ENCODE measurements at regions of chr6 and their contacts with region 1.

Region 1: DNA sequence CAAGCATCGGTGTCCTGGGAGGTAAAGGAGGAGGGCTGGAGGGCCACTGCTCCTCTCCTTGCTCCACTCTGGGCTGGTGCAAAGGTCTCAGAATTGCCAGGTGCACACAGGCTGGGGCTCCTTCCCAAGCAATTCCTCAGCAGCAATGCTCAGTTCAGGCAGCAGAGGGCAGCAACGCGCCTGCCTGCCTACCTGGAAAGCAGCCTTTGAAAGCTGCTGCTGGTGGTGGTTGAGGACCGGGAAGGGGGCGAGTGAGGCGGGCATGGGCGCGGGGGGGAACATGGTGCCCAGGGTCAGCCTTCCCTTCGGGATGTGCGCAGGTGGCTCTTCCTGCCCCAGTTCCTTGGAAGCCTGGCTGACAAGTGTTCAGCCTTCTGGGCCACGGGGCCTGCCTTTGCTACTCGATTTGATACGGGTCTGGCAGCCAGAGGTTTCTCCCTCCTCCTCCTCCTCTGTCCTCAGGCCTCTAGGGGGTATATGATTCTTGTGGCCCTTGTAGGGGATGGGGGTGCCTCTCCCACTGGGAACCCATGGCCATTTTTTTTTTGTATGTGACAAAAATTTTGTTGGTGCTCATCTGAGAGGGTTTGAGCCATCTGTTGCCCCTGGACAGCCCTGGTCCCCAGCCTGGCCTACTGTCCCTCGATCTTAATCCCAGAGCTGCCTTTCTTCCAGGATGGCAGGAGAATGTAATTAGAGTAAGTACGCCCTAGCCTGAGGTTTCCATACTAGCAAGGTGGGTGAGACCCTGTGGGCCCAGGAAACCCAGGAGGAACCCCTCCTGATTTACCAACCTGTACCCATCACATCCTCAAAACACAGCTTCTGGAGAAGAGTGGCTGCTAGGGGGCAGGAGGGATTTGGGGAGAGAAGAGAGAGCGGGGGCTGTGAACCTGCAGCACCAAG is 20.1 kb downstream of the MRPS18A start:
- H3K4me3 ChIP-seq: peak overlapping the region; percentile 10; the same call in 1 of the 2 replicates
- H3K27ac ChIP-seq: peak overlapping the region; percentile 19
- H3K4me1 ChIP-seq: peaks cover 3% of the 10 kb centered on the region; the same call in 1 of the 2 replicates
- CTCF ChIP-seq: peak; percentile 97

Region 2: GRCh38 chr6:43629104-43629504 is 38.4 kb before region 1 on chr6 and contains the start of gene GTPBP2:
- CTCF ChIA-PET with region 1: interaction called, 8 read pairs
- POLR2A ChIA-PET with region 1: interaction called, 16 read pairs
- H3K4me3 ChIP-seq: peak within 1 kb of the TSS; percentile 77
- H3K27ac ChIP-seq: peak within 1 kb of the TSS; percentile 90
- H3K4me1 ChIP-seq: 0 out of 2 replicates have a peak, but pooled peaks cover 8% of the 10 kb centered on the region
- CTCF ChIP-seq: no peak

Region 3: DNA sequence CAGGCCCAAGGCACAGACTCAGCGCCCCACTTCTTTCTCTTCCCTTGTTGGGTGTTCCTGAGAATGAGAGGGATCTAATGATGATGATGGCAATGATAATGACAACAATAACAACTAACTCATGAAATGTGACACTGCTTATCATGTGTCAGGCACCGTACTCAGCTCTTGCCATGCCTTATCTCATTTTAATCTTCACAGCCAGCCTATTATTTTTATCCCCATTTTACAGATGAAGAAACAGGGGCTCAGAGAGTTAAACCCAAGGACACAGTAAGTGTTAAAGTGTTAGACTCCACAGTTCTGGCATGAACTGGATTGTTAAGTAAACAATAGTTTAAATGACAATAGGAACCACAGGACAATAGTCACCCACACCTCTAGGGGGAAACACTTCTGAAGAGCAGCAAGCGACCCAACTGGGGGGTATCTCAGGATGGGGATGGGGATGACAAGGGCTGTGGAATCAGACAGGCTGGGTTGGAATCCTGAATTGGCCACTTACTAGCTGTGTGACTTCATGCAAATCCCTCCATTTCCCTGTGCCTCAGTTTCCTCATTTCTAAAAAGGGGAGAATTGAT is 10.2 kb before region 1 on chr6:
- CTCF ChIA-PET with region 1: interaction called, 16 read pairs
- POLR2A ChIA-PET with region 1: interaction called, 3 read pairs
- H3K4me3 ChIP-seq: no peak overlapping the region
- H3K27ac ChIP-seq: no peak overlapping the region
- H3K4me1 ChIP-seq: no peaks in the 10 kb centered on the region
- CTCF ChIP-seq: no peak

Region 4: DNA sequence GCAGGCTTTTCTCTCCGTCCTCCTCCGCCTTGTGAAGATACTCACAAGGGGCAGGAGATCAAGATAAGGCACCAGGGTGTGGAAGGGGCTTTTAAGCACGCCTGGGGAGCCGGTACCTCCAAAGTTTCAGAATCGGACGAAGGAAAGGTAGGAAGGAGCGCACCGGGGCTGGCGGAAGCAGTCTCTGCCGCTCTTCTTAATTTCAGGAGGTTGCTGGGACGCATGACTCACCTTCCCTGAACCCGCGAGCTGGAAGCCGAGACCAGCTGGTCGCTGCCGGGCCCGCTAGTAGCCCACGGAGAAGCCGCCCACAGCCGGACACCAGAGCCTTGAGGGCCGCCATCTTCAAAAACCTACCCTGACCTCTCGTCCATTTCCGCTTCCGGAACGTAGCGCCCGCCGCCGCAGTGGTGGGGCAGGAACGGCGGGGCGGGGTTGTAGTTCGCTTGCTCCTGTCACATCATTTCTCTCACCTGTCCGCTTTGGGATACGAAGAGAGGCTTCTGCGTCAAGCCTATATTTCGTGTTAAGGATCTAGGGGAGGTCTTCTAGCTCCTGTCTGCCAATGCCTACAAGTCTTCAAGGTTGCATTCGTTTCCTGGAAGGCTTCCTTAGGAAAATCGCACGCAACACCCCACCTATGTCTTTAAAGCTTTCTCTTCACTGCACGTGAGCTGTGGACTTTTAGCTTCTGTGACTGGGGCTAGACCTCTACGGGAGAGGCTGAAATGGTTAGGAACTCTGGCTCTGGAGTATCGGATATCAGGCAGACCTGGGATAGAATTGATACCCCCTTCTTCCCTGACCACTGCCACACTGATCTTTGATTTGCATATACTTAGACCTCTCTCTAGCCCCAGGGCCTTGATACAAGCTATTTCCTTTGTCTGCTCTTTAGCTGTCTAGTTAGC is 20.2 kb after region 1 on chr6 and contains the start of gene MRPS18A:
- CTCF ChIA-PET with region 1: interaction called, 101 read pairs
- POLR2A ChIA-PET with region 1: interaction called, 22 read pairs
- H3K4me3 ChIP-seq: peak within 1 kb of the TSS; percentile 91
- H3K27ac ChIP-seq: peak within 1 kb of the TSS; percentile 56
- H3K4me1 ChIP-seq: peaks cover 24% of the 10 kb centered on the region
- CTCF ChIP-seq: no peak

Region 5: DNA sequence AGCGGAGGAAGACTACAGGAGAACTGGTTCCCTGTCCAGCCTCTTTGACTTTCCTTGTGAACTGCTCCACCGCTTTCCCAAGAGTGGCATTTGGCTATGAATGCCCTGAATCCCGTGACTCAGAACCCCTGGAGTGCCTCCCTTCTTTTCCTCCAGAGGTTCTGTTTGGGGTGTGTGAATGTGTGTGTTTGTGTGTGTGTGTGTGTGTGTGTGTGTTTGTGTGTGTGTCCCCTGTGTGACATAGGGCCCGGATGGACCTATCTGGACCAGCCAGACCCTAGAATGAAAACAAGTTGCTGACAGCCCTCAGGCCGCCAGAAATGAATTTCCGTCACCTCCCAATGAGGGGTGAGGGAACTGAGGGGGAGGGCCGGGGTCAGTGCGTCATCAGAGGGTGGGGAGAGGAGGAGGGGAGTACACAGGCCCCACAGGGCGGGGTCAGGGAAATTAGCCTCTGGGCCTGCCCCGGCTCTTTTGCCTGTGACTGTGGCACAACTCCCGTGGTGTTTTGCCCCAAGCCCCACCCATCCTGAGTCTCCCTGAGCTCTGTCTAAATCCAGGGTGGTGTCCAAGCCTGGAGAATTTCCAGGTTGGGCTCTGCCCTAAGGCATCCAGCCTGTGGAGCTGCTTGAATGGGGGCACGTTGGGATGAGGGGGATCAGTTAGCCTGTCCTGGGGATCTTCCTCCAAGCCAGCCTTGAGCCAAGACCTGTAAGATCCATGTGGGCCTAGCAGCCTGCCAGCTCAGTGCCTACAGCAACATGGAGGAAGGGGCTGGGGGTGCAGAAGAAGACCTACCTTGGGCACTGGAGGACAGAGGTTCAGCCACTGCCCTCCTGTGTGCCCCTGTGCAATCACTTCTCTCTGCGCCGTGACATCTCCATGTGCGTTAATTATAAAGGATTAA is 35.3 kb after region 1 on chr6:
- CTCF ChIA-PET with region 1: interaction called, 14 read pairs
- POLR2A ChIA-PET with region 1: interaction called, 3 read pairs
- H3K4me3 ChIP-seq: no peak overlapping the region
- H3K27ac ChIP-seq: peak overlapping the region; percentile 50
- H3K4me1 ChIP-seq: peaks cover 38% of the 10 kb centered on the region
- CTCF ChIP-seq: no peak

Region 6: DNA sequence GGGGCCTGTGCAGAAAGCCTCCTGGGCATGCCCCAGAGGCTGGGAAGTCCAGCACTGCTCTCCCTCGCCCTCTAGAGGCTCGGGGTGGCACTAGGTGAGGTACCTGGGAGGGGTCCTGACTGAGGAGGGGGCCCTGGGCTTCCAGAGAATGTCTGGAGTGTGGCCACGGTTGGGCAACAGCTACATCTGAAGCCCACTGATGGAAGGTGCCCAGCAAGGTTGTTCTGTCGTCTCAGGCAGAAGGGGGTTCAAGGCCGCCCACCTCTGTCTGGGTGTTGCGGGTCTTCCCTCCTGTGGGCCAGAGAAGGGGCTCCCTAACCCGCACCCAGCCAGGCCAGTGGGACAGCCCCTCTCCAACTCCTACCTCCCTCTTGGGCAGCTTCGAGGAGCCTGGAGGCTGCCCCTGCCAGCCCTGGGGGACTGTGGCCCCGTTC is 91.1 kb after region 1 on chr6:
- CTCF ChIA-PET with region 1: interaction called, 59 read pairs
- POLR2A ChIA-PET with region 1: interaction called, 3 read pairs
- H3K4me3 ChIP-seq: no peak overlapping the region
- H3K27ac ChIP-seq: no peak overlapping the region
- H3K4me1 ChIP-seq: no peaks in the 10 kb centered on the region; the same call in 1 of the 2 replicates
- CTCF ChIP-seq: peak; percentile 30; the same call in 1 of the 2 replicates